Naive thymus-derived CD4-positive, alpha-beta T cell (primary cell): ENCODE measurements at regions of chr5 and their contacts with region 1.

Region 1: GRCh38 chr5:54310433-54311175 is at the start of gene ARL15:
- DNase-seq: peak; percentile 95 to 99 (median 98)
- ATAC-seq: peak; percentile 96
- H3K4me3 ChIP-seq: peak within 1 kb of the TSS; percentile 96
- H3K4me3 Mint-ChIP-seq: peak within 1 kb of the TSS; percentile 85 to 98 (median 94)
- H3K27ac ChIP-seq: peak within 1 kb of the TSS; percentile 78
- H3K27ac Mint-ChIP-seq: peak within 1 kb of the TSS; percentile 84 to 98 (median 95)
- H3K4me1 ChIP-seq: peaks cover 0 to 7% of the 10 kb centered on the region in 2 donors
- H3K4me1 Mint-ChIP-seq: peaks cover 12 to 36% (median 27%) of the 10 kb centered on the region in 7 donors
- H3K27me3 ChIP-seq: no peaks in the 10 kb centered on the region
- H3K27me3 Mint-ChIP-seq: peaks cover 0 to 28% (median 5%) of the 10 kb centered on the region in 5 donors
- total RNA-seq, gene ARL15: 9.6 to 15.6 (median 13.6) TPM

Region 2: GRCh38 chr5:53109443-53110127 is 1201.0 kb before region 1 on chr5 and contains the start of gene MOCS2:
- CTCF ChIA-PET with region 1: interaction called, 3 read pairs
- POLR2A ChIA-PET with region 1: interaction called, 7 read pairs
- intact Hi-C with region 1: loop called in 1 of 2 experiments (anchors 1 kb)
- DNase-seq: peak; percentile 87 to 93 (median 91)
- ATAC-seq: peak; percentile 98
- H3K4me3 ChIP-seq: peak within 1 kb of the TSS; percentile 88
- H3K4me3 Mint-ChIP-seq: peak within 1 kb of the TSS; percentile 93 to 99 (median 96)
- H3K27ac ChIP-seq: peak within 1 kb of the TSS; percentile 84
- H3K27ac Mint-ChIP-seq: peak within 1 kb of the TSS; percentile 86 to 98 (median 93)
- H3K4me1 ChIP-seq: peaks cover 6 to 7% of the 10 kb centered on the region in 2 donors
- H3K4me1 Mint-ChIP-seq: peaks cover 29 to 64% (median 60%) of the 10 kb centered on the region in 7 donors
- H3K27me3 ChIP-seq: no peaks in the 10 kb centered on the region
- H3K27me3 Mint-ChIP-seq: no peaks in the 10 kb centered on the region
- total RNA-seq, gene MOCS2: 12.8 to 29.8 (median 20.9) TPM

Region 3: GRCh38 chr5:53792338-53792737 is 518.3 kb before region 1 on chr5:
- CTCF ChIA-PET with region 1: no interaction called
- POLR2A ChIA-PET with region 1: no interaction called
- intact Hi-C with region 1: no loop called
- DNase-seq: no peak
- ATAC-seq: no peak
- H3K4me3 ChIP-seq: no peak overlapping the region
- H3K4me3 Mint-ChIP-seq: no peak overlapping the region
- H3K27ac ChIP-seq: no peak overlapping the region
- H3K27ac Mint-ChIP-seq: no peak overlapping the region
- H3K4me1 ChIP-seq: no peaks in the 10 kb centered on the region
- H3K4me1 Mint-ChIP-seq: peaks cover 0 to 2% (median 0%) of the 10 kb centered on the region in 7 donors
- H3K27me3 ChIP-seq: no peaks in the 10 kb centered on the region
- H3K27me3 Mint-ChIP-seq: peaks cover 2 to 11% (median 6%) of the 10 kb centered on the region in 5 donors

Region 4: DNA sequence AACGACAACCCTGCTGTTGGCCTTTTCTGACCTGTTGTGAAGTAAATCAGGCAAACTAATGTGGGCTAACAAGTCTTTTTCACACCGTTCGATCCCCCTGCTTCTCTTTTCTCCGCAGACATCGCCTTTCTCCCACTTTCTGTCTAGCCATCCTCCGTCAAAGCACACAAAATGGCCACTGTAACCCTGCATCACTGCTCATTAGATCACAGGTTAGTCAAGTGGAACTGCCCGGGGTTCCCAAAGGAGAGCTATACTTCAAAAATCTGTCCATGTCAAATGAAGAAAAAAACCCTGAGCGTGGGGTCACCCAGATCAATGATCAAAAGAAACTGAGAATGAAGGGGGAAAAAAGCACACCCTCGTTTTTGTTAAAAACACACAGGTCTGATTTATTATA is 212.3 kb before region 1 on chr5:
- CTCF ChIA-PET with region 1: no interaction called
- POLR2A ChIA-PET with region 1: no interaction called
- intact Hi-C with region 1: no loop called
- DNase-seq: no peak
- ATAC-seq: no peak
- H3K4me3 ChIP-seq: no peak overlapping the region
- H3K4me3 Mint-ChIP-seq: no peak overlapping the region
- H3K27ac ChIP-seq: no peak overlapping the region
- H3K27ac Mint-ChIP-seq: no peak overlapping the region
- H3K4me1 ChIP-seq: no peaks in the 10 kb centered on the region
- H3K4me1 Mint-ChIP-seq: peaks cover 0 to 5% (median 0%) of the 10 kb centered on the region in 7 donors
- H3K27me3 ChIP-seq: no peaks in the 10 kb centered on the region
- H3K27me3 Mint-ChIP-seq: no peaks in the 10 kb centered on the region

Region 5: GRCh38 chr5:54243473-54244080 is 67.0 kb before region 1 on chr5:
- CTCF ChIA-PET with region 1: interaction called, 4 read pairs
- POLR2A ChIA-PET with region 1: interaction called, 4 read pairs
- intact Hi-C with region 1: loop called (anchors 2 to 5 kb)
- DNase-seq: peak in 6 of 9 donors; percentile 10 to 45 (median 36)
- ATAC-seq: peak; percentile 54
- H3K4me3 ChIP-seq: no peak overlapping the region
- H3K4me3 Mint-ChIP-seq: no peak overlapping the region
- H3K27ac ChIP-seq: no peak overlapping the region
- H3K27ac Mint-ChIP-seq: no peak overlapping the region
- H3K4me1 ChIP-seq: no peaks in the 10 kb centered on the region
- H3K4me1 Mint-ChIP-seq: peaks cover 0 to 22% (median 14%) of the 10 kb centered on the region in 7 donors
- H3K27me3 ChIP-seq: no peaks in the 10 kb centered on the region
- H3K27me3 Mint-ChIP-seq: peaks cover 0 to 10% (median 0%) of the 10 kb centered on the region in 5 donors

Region 6: GRCh38 chr5:54517174-54518092 is 206.8 kb after region 1 on chr5 and contains the start of gene SNX18:
- CTCF ChIA-PET with region 1: interaction called, 4 read pairs
- POLR2A ChIA-PET with region 1: interaction called, 6 read pairs
- intact Hi-C with region 1: loop called (anchors 1 to 2 kb)
- DNase-seq: peak; percentile 87 to 94 (median 92)
- ATAC-seq: peak; percentile 98
- H3K4me3 ChIP-seq: peak within 1 kb of the TSS; percentile 62
- H3K4me3 Mint-ChIP-seq: peak within 1 kb of the TSS; percentile 62 to 94 (median 91)
- H3K27ac ChIP-seq: peak within 1 kb of the TSS; percentile 83
- H3K27ac Mint-ChIP-seq: peak within 1 kb of the TSS in 8 of 9 donors; percentile 52 to 87 (median 69)
- H3K4me1 ChIP-seq: peaks cover 18 to 37% of the 10 kb centered on the region in 2 donors
- H3K4me1 Mint-ChIP-seq: peaks cover 26 to 48% (median 41%) of the 10 kb centered on the region in 7 donors
- H3K27me3 ChIP-seq: no peaks in the 10 kb centered on the region
- H3K27me3 Mint-ChIP-seq: peaks cover 0 to 29% (median 0%) of the 10 kb centered on the region in 5 donors
- total RNA-seq, gene SNX18: 14.3 to 40.9 (median 28.1) TPM

Region 7: GRCh38 chr5:54867310-54867944 is 556.8 kb after region 1 on chr5:
- CTCF ChIA-PET with region 1: no interaction called
- POLR2A ChIA-PET with region 1: interaction called, 4 read pairs
- intact Hi-C with region 1: loop called in 1 of 2 experiments (anchors 1 kb)
- DNase-seq: peak in 7 of 9 donors; percentile 38 to 66 (median 59)
- ATAC-seq: peak; percentile 83
- H3K4me3 ChIP-seq: peak overlapping the region; percentile 33
- H3K4me3 Mint-ChIP-seq: peak overlapping the region; percentile 2 to 80 (median 52)
- H3K27ac ChIP-seq: no peak overlapping the region
- H3K27ac Mint-ChIP-seq: peak overlapping the region in 4 of 9 donors; percentile 44 to 60 (median 52)
- H3K4me1 ChIP-seq: no peaks in the 10 kb centered on the region
- H3K4me1 Mint-ChIP-seq: peaks cover 0 to 20% (median 9%) of the 10 kb centered on the region in 7 donors
- H3K27me3 ChIP-seq: no peaks in the 10 kb centered on the region
- H3K27me3 Mint-ChIP-seq: peaks cover 0 to 69% (median 11%) of the 10 kb centered on the region in 5 donors

Region 8: GRCh38 chr5:55534436-55535198 is 1224.0 kb after region 1 on chr5 and contains the start of gene PLPP1:
- CTCF ChIA-PET with region 1: no interaction called
- POLR2A ChIA-PET with region 1: no interaction called
- intact Hi-C with region 1: loop called in 1 of 2 experiments (anchors 2 kb)
- DNase-seq: peak; percentile 74 to 91 (median 86)
- ATAC-seq: peak; percentile 91
- H3K4me3 ChIP-seq: peak within 1 kb of the TSS; percentile 83
- H3K4me3 Mint-ChIP-seq: peak within 1 kb of the TSS; percentile 86 to 97 (median 94)
- H3K27ac ChIP-seq: peak within 1 kb of the TSS; percentile 91
- H3K27ac Mint-ChIP-seq: peak within 1 kb of the TSS; percentile 79 to 96 (median 91)
- H3K4me1 ChIP-seq: peaks cover 6 to 26% of the 10 kb centered on the region in 2 donors
- H3K4me1 Mint-ChIP-seq: peaks cover 20 to 61% (median 50%) of the 10 kb centered on the region in 7 donors
- H3K27me3 ChIP-seq: no peaks in the 10 kb centered on the region
- H3K27me3 Mint-ChIP-seq: no peaks in the 10 kb centered on the region
- total RNA-seq, gene PLPP1: 8.0 to 31.3 (median 8.4) TPM